Transverse colon (tissue), 4 donors: ENCODE measurements at regions of chr3 and their contacts with region 1.

Region 1: DNA sequence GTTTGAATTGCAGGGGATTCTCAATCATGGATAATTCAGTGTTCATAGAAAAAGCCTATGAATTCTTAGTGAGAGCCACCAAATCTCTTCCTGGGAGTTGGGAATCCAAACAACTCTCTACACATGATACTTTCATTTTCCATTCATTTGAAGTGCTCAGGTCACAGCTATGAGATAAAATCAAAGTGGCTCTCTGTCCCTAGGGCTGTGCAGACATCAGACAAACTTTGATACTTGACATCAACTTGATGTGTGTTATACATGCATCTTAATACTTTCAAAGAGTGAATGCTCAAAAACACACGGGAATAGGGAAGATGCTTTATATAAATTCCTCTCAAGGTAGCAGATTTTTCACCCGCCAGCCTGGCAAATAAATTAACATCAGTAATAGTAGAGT is 75.3 kb upstream of the CHMP2B start:
- DNase-seq: no peak
- H3K4me3 ChIP-seq: no peak overlapping the region
- H3K27ac ChIP-seq: no peak overlapping the region
- H3K4me1 ChIP-seq: no peaks in the 10 kb centered on the region
- H3K27me3 ChIP-seq: no peaks in the 10 kb centered on the region
- CTCF ChIP-seq: no peak
- EP300 ChIP-seq: no peak
- POLR2A ChIP-seq: no peak

Region 2: GRCh38 chr3:86774082-86774691 is 377.6 kb before region 1 on chr3:
- in situ Hi-C with region 1: loop called in 1 of 4 experiments (anchors 25 kb)
- intact Hi-C with region 1: loop called (anchors 10 kb)
- DNase-seq: no peak
- H3K4me3 ChIP-seq: no peak overlapping the region
- H3K27ac ChIP-seq: no peak overlapping the region
- H3K4me1 ChIP-seq: no peaks in the 10 kb centered on the region
- H3K27me3 ChIP-seq: no peaks in the 10 kb centered on the region
- CTCF ChIP-seq: peak; percentile 31 to 47 (median 40)
- EP300 ChIP-seq: no peak
- POLR2A ChIP-seq: no peak